ENCODE measurements at regions of chr2 and their contacts with region 1.

Region 1: GRCh38 chr2:162890690-162891311 is 52.2 kb upstream of the KCNH7 start:
- DNase-seq: peak; percentile 65
- H3K4me3 ChIP-seq: no peak overlapping the region
- H3K27ac ChIP-seq: no peak overlapping the region
- H3K4me1 ChIP-seq: no peaks in the 10 kb centered on the region
- H3K27me3 ChIP-seq: no peaks in the 10 kb centered on the region
- CTCF ChIP-seq: peak; percentile 68 to 77
- POLR2A ChIP-seq: no peak

Region 2: DNA sequence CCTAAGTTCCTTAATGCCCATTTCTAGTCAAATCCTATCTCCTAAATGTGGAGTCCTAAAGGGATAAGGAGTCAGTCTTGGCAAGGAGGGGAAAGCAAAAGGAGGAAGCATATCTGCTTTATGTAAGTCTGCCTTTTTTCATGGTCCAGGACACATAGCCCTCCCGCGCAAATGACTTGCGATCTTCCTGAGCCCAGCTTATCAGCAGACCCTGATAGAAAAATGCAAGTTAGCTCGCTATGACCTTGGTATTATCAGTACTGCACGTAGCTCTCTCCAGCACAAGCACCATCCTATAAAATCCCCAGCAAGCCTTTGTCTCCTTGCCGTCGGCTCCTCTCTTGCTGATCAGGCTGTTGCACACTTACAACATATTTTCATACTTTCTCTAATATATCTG is 229.2 kb after region 1 on chr2:
- CTCF ChIA-PET with region 1: no interaction called
- POLR2A ChIA-PET with region 1: no interaction called
- dilution Hi-C with region 1: no loop called
- intact Hi-C with region 1: loop called (anchors 5 kb)
- DNase-seq: no peak
- H3K4me3 ChIP-seq: no peak overlapping the region
- H3K27ac ChIP-seq: no peak overlapping the region
- H3K4me1 ChIP-seq: no peaks in the 10 kb centered on the region
- H3K27me3 ChIP-seq: no peaks in the 10 kb centered on the region
- CTCF ChIP-seq: no peak
- POLR2A ChIP-seq: no peak

Region 3: DNA sequence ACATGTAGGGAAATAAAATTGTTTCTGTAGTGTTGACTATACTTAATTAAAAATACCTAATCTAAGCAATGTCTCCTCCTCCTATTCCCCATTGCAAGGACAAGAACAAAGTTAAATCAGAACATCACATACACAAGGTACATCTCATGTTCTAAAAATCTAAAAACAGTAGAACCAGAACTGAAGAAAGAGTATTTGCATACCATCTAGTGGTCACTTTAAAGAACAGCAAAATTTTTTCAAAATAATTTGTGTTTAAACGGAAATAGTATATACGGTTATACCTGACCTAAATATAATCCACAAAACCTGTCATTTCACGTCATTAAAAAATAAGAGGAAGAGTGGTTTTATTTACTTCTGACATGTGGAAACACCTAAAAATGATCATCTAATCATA is 242.0 kb after region 1 on chr2:
- CTCF ChIA-PET with region 1: interaction called, 7 read pairs
- POLR2A ChIA-PET with region 1: no interaction called
- dilution Hi-C with region 1: no loop called
- intact Hi-C with region 1: loop called (anchors 1 kb)
- DNase-seq: peak; percentile 7
- H3K4me3 ChIP-seq: no peak overlapping the region
- H3K27ac ChIP-seq: no peak overlapping the region
- H3K4me1 ChIP-seq: no peaks in the 10 kb centered on the region
- H3K27me3 ChIP-seq: no peaks in the 10 kb centered on the region
- CTCF ChIP-seq: peak; percentile 6 to 21
- POLR2A ChIP-seq: no peak